ENCODE measurements at regions of chr19 and their contacts with region 1.

Region 1: DNA sequence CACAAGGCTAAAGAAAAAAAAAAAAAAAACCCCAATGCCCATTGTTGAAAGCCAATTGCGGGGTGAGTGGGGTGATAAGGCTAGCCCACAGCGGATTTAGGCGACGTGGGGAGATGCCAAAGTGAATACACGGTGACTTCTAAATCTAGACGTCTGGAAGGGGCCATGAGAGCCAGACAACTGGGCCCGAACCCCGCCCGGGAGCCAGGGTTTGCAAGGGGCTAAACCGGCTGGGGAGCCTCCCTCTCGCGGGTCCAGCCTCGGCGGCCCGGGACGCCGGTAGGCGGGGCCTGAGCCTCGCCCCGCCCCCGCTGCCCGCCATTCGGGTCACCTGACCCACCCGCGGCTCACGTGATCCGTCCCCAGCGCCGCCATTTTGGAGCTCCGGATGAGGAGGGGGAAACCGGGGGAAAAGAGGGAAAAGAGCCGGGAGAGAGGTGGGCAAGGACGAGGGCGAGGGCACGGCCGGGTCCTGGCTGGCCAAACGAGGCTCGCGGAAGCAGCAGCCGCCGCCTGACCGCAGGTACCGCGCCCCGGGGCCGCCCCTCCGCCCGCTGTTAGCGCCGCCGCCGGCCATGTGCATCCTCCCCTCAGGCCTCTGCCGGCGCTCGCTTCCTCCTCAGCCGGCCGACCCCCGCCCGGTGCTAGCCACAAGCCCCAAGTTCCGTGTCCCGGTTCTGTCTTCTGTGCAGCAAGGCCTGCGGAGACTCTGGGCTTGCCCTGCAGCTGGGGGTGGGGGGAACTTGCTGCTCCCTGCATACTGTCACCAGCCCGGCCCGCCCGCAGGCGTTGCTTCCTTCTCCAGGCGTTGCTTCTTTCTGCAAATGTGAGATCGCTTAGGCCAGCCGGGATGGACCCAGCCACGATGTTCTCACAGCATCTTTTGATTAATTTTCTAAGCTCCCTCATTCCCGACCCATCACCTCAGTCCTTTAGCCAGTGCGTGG is at the start of gene ZNF507:
- DNase-seq: peak; percentile 74 to 82 (median 77)
- H3K4me3 ChIP-seq: peak within 1 kb of the TSS; percentile 80 to 91
- H3K4me3 Mint-ChIP-seq: peak within 1 kb of the TSS; percentile 91 to 99 (median 98)
- H3K27ac ChIP-seq: peak within 1 kb of the TSS; percentile 80
- H3K27ac Mint-ChIP-seq: peak within 1 kb of the TSS; percentile 90 to 98 (median 96)
- H3K4me1 ChIP-seq: peaks cover 49% of the 10 kb centered on the region
- H3K4me1 Mint-ChIP-seq: peaks cover 27 to 49% (median 39%) of the 10 kb centered on the region in 4 donors
- H3K27me3 ChIP-seq: no peaks in the 10 kb centered on the region
- H3K27me3 Mint-ChIP-seq: peaks cover 0 to 1% of the 10 kb centered on the region in 2 donors
- total RNA-seq, gene ZNF507: 39.2 to 40.8 TPM

Region 2: GRCh38 chr19:32224371-32225244 is 120.9 kb before region 1 on chr19:
- CTCF ChIA-PET with region 1: no interaction called
- POLR2A ChIA-PET with region 1: no interaction called
- intact Hi-C with region 1: no loop called
- DNase-seq: peak in 4 of 5 donors; percentile 43 to 50 (median 46)
- H3K4me3 ChIP-seq: no peak overlapping the region
- H3K4me3 Mint-ChIP-seq: peak overlapping the region; percentile 71 to 85 (median 80)
- H3K27ac ChIP-seq: no peak overlapping the region
- H3K27ac Mint-ChIP-seq: no peak overlapping the region
- H3K4me1 ChIP-seq: peaks cover 11% of the 10 kb centered on the region
- H3K4me1 Mint-ChIP-seq: peaks cover 5 to 16% (median 6%) of the 10 kb centered on the region in 4 donors
- H3K27me3 ChIP-seq: peaks cover 14% of the 10 kb centered on the region
- H3K27me3 Mint-ChIP-seq: peaks cover 17 to 39% of the 10 kb centered on the region in 2 donors

Region 3: DNA sequence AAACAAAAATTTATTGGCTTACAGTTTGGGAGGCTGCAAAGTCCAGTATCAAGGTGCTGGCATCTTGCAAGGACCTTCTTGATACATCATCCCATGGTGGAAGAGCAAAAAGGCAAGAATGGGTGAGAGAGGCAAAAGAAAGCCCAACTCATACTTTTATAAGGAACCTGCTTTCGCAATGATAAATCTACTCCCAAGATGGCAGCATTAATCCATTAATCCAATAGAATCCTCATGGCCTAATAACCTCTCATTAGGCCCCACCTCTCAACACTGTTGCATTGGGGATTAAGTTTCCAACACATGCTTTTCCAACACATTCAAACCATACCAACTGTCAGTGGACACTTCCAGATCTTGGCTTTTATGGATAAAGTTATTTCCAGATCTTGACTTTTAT is 48.8 kb before region 1 on chr19:
- CTCF ChIA-PET with region 1: no interaction called
- POLR2A ChIA-PET with region 1: no interaction called
- intact Hi-C with region 1: no loop called
- DNase-seq: no peak
- H3K4me3 ChIP-seq: no peak overlapping the region
- H3K4me3 Mint-ChIP-seq: no peak overlapping the region
- H3K27ac ChIP-seq: no peak overlapping the region
- H3K27ac Mint-ChIP-seq: no peak overlapping the region
- H3K4me1 ChIP-seq: no peaks in the 10 kb centered on the region
- H3K4me1 Mint-ChIP-seq: no peaks in the 10 kb centered on the region
- H3K27me3 ChIP-seq: no peaks in the 10 kb centered on the region
- H3K27me3 Mint-ChIP-seq: peaks cover 4 to 8% of the 10 kb centered on the region in 2 donors

Region 4: GRCh38 chr19:32357720-32358119 is 12.2 kb after region 1 on chr19:
- CTCF ChIA-PET with region 1: interaction called, 11 read pairs
- POLR2A ChIA-PET with region 1: interaction called, 10 read pairs
- intact Hi-C with region 1: no loop called
- DNase-seq: no peak
- H3K4me3 ChIP-seq: no peak overlapping the region
- H3K4me3 Mint-ChIP-seq: no peak overlapping the region
- H3K27ac ChIP-seq: no peak overlapping the region
- H3K27ac Mint-ChIP-seq: no peak overlapping the region
- H3K4me1 ChIP-seq: peaks cover 21% of the 10 kb centered on the region
- H3K4me1 Mint-ChIP-seq: peaks cover 26 to 74% (median 53%) of the 10 kb centered on the region in 4 donors
- H3K27me3 ChIP-seq: no peaks in the 10 kb centered on the region
- H3K27me3 Mint-ChIP-seq: no peaks in the 10 kb centered on the region

Region 5: DNA sequence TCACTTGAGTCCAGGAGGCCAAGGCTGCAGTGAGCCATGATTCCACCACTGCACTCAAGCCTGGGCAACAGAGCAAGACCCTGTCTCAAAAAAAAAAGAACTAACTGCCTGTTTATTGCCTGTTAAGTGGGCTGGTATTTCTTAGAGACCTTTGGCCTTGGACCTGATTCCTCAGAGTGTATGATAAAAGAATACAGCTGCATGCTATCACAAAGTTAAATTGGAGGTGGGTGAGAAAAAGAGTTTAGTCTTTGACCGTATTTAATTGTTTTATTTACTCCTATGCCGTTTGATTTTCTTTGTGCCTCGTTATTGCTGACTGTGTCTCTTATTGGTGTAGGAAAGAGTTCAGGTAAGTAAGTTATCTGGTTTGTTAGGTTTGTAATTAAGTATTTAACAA is 34.7 kb after region 1 on chr19:
- CTCF ChIA-PET with region 1: no interaction called
- POLR2A ChIA-PET with region 1: no interaction called
- intact Hi-C with region 1: no loop called
- DNase-seq: no peak
- H3K4me3 ChIP-seq: no peak overlapping the region
- H3K4me3 Mint-ChIP-seq: no peak overlapping the region
- H3K27ac ChIP-seq: no peak overlapping the region
- H3K27ac Mint-ChIP-seq: no peak overlapping the region
- H3K4me1 ChIP-seq: no peaks in the 10 kb centered on the region
- H3K4me1 Mint-ChIP-seq: peaks cover 3 to 7% (median 7%) of the 10 kb centered on the region in 4 donors
- H3K27me3 ChIP-seq: no peaks in the 10 kb centered on the region
- H3K27me3 Mint-ChIP-seq: no peaks in the 10 kb centered on the region

Region 6: DNA sequence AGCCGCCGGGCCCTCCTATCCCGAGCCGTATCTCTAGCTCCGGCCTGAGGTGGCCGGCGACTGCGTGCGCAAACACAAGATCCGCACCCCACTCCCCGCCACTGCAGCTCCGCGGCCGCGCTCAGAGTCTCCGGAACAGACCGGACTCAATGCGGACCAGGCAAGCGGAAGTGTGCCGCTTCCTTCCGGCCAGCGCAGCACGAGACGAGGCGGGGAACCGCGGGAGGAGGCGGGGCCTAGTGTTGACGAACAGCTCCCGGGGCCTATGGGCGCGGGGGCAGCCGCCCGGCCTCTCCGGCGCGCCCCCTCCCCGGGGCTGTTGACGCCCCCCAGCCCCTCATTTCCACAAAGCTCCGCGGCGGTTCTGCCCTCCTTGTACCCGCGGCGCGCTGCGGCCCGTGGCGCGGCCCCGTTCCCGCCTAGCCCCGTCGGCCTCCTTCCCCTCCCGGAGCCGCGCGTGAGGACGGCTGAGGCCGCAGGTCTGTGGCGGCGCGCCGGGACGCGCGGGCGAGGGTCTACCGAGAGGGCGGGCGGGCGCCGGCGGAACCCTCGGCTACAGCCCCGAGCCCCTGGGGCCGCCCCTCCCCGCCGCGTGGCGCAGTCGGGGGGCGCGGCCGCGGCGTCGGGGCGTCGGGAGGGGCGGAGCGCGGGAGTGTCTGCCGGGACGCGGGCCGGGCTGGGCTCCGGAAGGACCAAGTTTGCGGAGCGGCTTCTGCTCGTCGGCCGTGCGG is 60.1 kb after region 1 on chr19 and contains the start of gene DPY19L3:
- CTCF ChIA-PET with region 1: no interaction called
- POLR2A ChIA-PET with region 1: interaction called, 36 read pairs
- intact Hi-C with region 1: loop called (anchors 1 kb)
- DNase-seq: peak; percentile 79 to 85 (median 83)
- H3K4me3 ChIP-seq: peak within 1 kb of the TSS; percentile 61 to 81
- H3K4me3 Mint-ChIP-seq: peak within 1 kb of the TSS; percentile 85 to 92 (median 88)
- H3K27ac ChIP-seq: peak within 1 kb of the TSS; percentile 50
- H3K27ac Mint-ChIP-seq: peak within 1 kb of the TSS; percentile 82 to 94 (median 90)
- H3K4me1 ChIP-seq: peaks cover 16% of the 10 kb centered on the region
- H3K4me1 Mint-ChIP-seq: peaks cover 5 to 19% (median 11%) of the 10 kb centered on the region in 4 donors
- H3K27me3 ChIP-seq: no peaks in the 10 kb centered on the region
- H3K27me3 Mint-ChIP-seq: no peaks in the 10 kb centered on the region
- total RNA-seq, gene DPY19L3: 16.9 to 17.9 TPM

Region 7: DNA sequence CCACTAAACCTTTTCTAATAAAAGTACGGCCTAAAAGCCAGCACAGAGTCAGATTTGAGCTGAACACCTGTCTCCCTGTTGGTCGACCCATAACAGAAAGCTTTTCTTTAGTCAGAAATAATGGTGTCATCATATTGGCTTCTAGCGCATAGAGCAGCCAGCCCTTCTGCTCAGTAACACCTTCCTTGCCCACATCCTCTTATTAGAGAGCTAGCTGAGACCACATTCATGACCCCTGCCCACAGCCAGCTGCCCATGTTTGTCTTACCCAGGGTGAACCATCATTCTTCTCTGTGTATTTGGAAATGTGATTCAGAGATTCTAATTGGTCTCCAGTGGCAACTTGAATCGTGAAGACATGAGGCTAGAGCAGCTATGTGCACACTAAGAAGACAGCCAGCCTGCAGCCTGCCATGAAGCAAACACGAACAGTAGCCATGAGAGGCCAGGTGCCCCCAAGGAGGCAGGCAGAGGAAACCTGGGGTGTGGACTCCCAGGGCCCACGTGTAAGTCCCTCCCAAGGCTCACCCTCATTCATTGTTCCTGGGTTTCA is 153.2 kb after region 1 on chr19:
- CTCF ChIA-PET with region 1: no interaction called
- POLR2A ChIA-PET with region 1: no interaction called
- intact Hi-C with region 1: no loop called
- DNase-seq: peak in 1 of 5 donors; percentile 14
- H3K4me3 ChIP-seq: no peak overlapping the region
- H3K4me3 Mint-ChIP-seq: no peak overlapping the region
- H3K27ac ChIP-seq: no peak overlapping the region
- H3K27ac Mint-ChIP-seq: no peak overlapping the region
- H3K4me1 ChIP-seq: no peaks in the 10 kb centered on the region
- H3K4me1 Mint-ChIP-seq: peaks cover 3 to 10% (median 6%) of the 10 kb centered on the region in 4 donors
- H3K27me3 ChIP-seq: no peaks in the 10 kb centered on the region
- H3K27me3 Mint-ChIP-seq: peaks cover 3 to 4% of the 10 kb centered on the region in 2 donors

Region 8: DNA sequence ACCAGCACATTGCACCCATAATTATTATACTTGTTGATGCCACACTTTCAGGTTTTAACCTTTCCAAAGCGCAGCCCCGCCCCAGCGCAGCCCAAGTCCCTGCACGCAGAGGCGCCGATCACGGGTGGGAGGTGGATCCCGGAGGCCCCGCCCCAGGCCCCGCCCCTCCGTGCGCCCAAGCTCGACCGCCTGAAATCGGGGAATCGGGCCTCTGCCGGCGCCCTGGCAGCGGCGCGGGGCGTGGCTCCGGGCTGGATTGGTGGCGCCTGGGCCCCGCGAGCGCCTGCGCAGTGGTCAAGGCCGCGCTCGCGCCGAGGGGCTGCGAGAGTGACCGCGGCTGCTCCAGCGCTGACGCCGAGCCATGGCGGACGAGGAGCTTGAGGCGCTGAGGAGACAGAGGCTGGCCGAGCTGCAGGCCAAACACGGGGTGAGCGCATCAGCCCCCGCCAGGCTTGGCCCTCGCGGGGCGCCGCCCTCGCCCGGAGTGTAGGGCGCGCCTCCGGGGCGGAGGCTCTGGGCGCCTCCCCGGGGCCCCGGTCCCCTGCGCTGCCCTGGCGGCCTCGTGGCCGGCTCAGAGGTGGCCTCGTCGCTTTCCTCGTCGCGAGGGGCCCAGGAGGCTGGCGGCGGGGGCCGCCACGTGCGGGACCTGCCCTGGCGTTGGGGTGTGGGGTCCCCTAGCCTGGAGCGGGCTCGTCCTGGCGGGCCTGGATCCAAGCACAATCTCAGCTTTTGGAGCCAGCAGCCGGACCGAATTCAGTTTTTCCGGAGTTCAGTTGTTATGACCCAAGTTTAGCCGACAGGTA is 235.6 kb after region 1 on chr19 and contains the start of gene PDCD5:
- CTCF ChIA-PET with region 1: interaction called, 3 read pairs
- POLR2A ChIA-PET with region 1: interaction called, 9 read pairs
- intact Hi-C with region 1: loop called (anchors 2 kb)
- DNase-seq: peak; percentile 93 to 97 (median 94)
- H3K4me3 ChIP-seq: peak within 1 kb of the TSS; percentile 72 to 88
- H3K4me3 Mint-ChIP-seq: peak within 1 kb of the TSS; percentile 90 to 99 (median 96)
- H3K27ac ChIP-seq: peak within 1 kb of the TSS; percentile 74
- H3K27ac Mint-ChIP-seq: peak within 1 kb of the TSS; percentile 83 to 96 (median 92)
- H3K4me1 ChIP-seq: peaks cover 25% of the 10 kb centered on the region
- H3K4me1 Mint-ChIP-seq: peaks cover 18 to 39% (median 28%) of the 10 kb centered on the region in 4 donors
- H3K27me3 ChIP-seq: no peaks in the 10 kb centered on the region
- H3K27me3 Mint-ChIP-seq: peaks cover under 1% of the 10 kb centered on the region in 2 donors
- total RNA-seq, gene PDCD5: 61.1 to 67.4 TPM

Measured in CD4-positive, alpha-beta memory T cell (primary cell).